Dendritic cell treated with granulocyte-macrophage colony-stimulating factor and Interleukin-4, amounts not matched to agents 40 ng/mL and 50 ng/mL, for 4 days (primary cell): ENCODE measurements at regions of chr18 and their contacts with region 1.

Region 1: DNA sequence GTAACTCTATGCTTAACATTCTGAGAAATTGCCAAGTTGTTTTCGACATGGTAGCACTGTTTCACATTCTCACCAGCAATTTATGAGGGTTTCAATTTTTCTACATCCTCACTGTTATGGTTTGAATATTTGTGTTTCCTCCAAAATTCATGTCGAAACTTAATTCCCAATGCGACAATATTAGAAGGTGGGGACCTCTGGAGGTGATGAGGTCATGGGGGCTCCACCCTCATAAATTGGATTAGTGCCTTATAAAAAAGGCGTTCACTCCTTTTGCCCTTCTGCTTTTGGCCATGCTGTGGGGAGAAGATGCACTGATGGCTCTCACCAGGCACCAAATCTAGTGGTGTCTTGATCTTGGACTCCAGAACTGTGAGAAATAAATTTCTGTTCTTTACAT is 110.3 kb downstream of the HRH4 start:
- H3K4me3 Mint-ChIP-seq: no peak overlapping the region
- H3K27ac Mint-ChIP-seq: no peak overlapping the region
- H3K4me1 Mint-ChIP-seq: no peaks in the 10 kb centered on the region
- H3K27me3 Mint-ChIP-seq: no peaks in the 10 kb centered on the region

Region 2: GRCh38 chr18:24514439-24514838 is 56.3 kb before region 1 on chr18:
- intact Hi-C with region 1: no loop called
- H3K4me3 Mint-ChIP-seq: no peak overlapping the region
- H3K27ac Mint-ChIP-seq: no peak overlapping the region
- H3K4me1 Mint-ChIP-seq: peaks cover 18% of the 10 kb centered on the region
- H3K27me3 Mint-ChIP-seq: no peaks in the 10 kb centered on the region

Region 3: GRCh38 chr18:24631243-24632025 is 60.7 kb after region 1 on chr18:
- intact Hi-C with region 1: loop called (anchors 10 kb)
- H3K4me3 Mint-ChIP-seq: no peak overlapping the region
- H3K27ac Mint-ChIP-seq: no peak overlapping the region
- H3K4me1 Mint-ChIP-seq: peaks cover 8% of the 10 kb centered on the region
- H3K27me3 Mint-ChIP-seq: no peaks in the 10 kb centered on the region

Region 4: GRCh38 chr18:24659827-24660720 is 89.4 kb after region 1 on chr18:
- intact Hi-C with region 1: no loop called
- H3K4me3 Mint-ChIP-seq: peak overlapping the region; percentile 73
- H3K27ac Mint-ChIP-seq: peak overlapping the region; percentile 39
- H3K4me1 Mint-ChIP-seq: peaks cover 11% of the 10 kb centered on the region
- H3K27me3 Mint-ChIP-seq: no peaks in the 10 kb centered on the region